Naive thymus-derived CD4-positive, alpha-beta T cell (primary cell): ENCODE measurements at regions of chr6 and their contacts with region 1.

Region 1: DNA sequence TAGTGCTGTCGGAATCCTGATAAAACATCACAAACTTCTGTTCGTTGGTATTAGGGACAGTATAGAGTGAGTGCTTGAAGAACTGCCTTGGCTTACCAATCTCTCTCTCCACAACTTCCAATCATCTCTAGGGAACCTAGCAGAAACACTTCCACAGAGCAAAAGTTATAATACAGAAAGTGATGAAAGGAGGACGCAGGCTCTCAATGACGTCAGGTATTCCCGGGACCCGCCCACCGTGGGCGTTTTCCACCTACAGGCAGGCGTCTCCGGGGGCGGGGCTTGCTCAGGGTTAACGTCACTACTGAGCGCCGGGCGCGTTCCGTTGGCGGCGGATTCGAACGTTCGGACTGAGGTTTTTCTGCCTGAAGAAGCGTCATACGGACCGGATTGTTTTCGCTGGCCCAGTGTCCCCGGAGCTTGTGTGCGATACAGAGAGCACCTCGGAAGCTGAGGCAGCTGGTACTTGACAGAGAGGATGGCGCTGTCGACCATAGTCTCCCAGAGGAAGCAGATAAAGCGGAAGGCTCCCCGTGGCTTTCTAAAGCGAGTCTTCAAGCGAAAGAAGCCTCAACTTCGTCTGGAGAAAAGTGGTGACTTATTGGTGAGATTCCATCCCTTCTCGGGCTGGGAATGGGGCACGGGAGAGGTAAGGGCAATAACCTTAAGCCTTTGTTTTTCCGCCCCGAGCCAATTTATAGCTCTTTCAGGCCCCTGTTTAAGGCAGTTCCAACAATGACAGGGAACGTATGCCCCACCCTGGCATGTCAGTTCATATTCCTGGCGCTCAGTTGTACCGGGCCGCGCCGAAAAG is at the start of gene CENPW:
- DNase-seq: peak; percentile 84 to 96 (median 87)
- ATAC-seq: peak; percentile 98
- H3K4me3 ChIP-seq: peak within 1 kb of the TSS; percentile 80
- H3K4me3 Mint-ChIP-seq: no peak within 1 kb of the TSS
- H3K27ac ChIP-seq: peak within 1 kb of the TSS; percentile 33
- H3K27ac Mint-ChIP-seq: no peak within 1 kb of the TSS
- H3K4me1 ChIP-seq: peaks cover 6 to 12% of the 10 kb centered on the region in 2 donors
- H3K4me1 Mint-ChIP-seq: peaks cover 5 to 21% (median 12%) of the 10 kb centered on the region in 7 donors
- H3K27me3 ChIP-seq: no peaks in the 10 kb centered on the region
- H3K27me3 Mint-ChIP-seq: no peaks in the 10 kb centered on the region
- total RNA-seq, gene CENPW: 1.2 to 37.1 (median 3.9) TPM

Region 2: GRCh38 chr6:125779924-125780539 is 560.0 kb before region 1 on chr6:
- CTCF ChIA-PET with region 1: no interaction called
- POLR2A ChIA-PET with region 1: no interaction called
- intact Hi-C with region 1: loop called in 1 of 2 experiments (anchors 2 kb)
- DNase-seq: peak; percentile 83 to 96 (median 94)
- ATAC-seq: peak; percentile 89
- H3K4me3 ChIP-seq: peak overlapping the region; percentile 84
- H3K4me3 Mint-ChIP-seq: no peak overlapping the region
- H3K27ac ChIP-seq: peak overlapping the region; percentile 77
- H3K27ac Mint-ChIP-seq: no peak overlapping the region
- H3K4me1 ChIP-seq: peaks cover 4 to 19% of the 10 kb centered on the region in 2 donors
- H3K4me1 Mint-ChIP-seq: peaks cover 5 to 27% (median 22%) of the 10 kb centered on the region in 7 donors
- H3K27me3 ChIP-seq: no peaks in the 10 kb centered on the region
- H3K27me3 Mint-ChIP-seq: peaks cover 0 to 28% (median 0%) of the 10 kb centered on the region in 5 donors

Region 3: GRCh38 chr6:125986300-125987025 is 353.5 kb before region 1 on chr6 and contains the start of gene TRMT11:
- CTCF ChIA-PET with region 1: no interaction called
- POLR2A ChIA-PET with region 1: no interaction called
- intact Hi-C with region 1: loop called in 1 of 2 experiments (anchors 2 kb)
- DNase-seq: peak; percentile 58 to 80 (median 77)
- ATAC-seq: peak; percentile 95
- H3K4me3 ChIP-seq: peak within 1 kb of the TSS; percentile 89
- H3K4me3 Mint-ChIP-seq: peak within 1 kb of the TSS in 4 of 10 donors; percentile 12 to 40 (median 24)
- H3K27ac ChIP-seq: peak within 1 kb of the TSS; percentile 76
- H3K27ac Mint-ChIP-seq: no peak within 1 kb of the TSS
- H3K4me1 ChIP-seq: peaks cover 14 to 21% of the 10 kb centered on the region in 2 donors
- H3K4me1 Mint-ChIP-seq: peaks cover 0 to 19% (median 2%) of the 10 kb centered on the region in 7 donors
- H3K27me3 ChIP-seq: no peaks in the 10 kb centered on the region
- H3K27me3 Mint-ChIP-seq: no peaks in the 10 kb centered on the region
- total RNA-seq, gene TRMT11: 13.6 to 34.1 (median 20.1) TPM

Region 4: GRCh38 chr6:126300735-126301134 is 39.3 kb before region 1 on chr6:
- CTCF ChIA-PET with region 1: no interaction called
- POLR2A ChIA-PET with region 1: no interaction called
- intact Hi-C with region 1: loop called in 1 of 2 experiments (anchors 5 kb)
- DNase-seq: no peak
- ATAC-seq: no peak
- H3K4me3 ChIP-seq: no peak overlapping the region
- H3K4me3 Mint-ChIP-seq: peak overlapping the region in 4 of 10 donors; percentile 34 to 55 (median 40)
- H3K27ac ChIP-seq: no peak overlapping the region
- H3K27ac Mint-ChIP-seq: peak overlapping the region in 1 of 9 donors; percentile 36
- H3K4me1 ChIP-seq: no peaks in the 10 kb centered on the region
- H3K4me1 Mint-ChIP-seq: peaks cover 3 to 18% (median 11%) of the 10 kb centered on the region in 7 donors
- H3K27me3 ChIP-seq: no peaks in the 10 kb centered on the region
- H3K27me3 Mint-ChIP-seq: peaks cover 0 to 13% (median 5%) of the 10 kb centered on the region in 5 donors